ENCODE measurements at regions of chr10 and their contacts with region 1.

Region 1: DNA sequence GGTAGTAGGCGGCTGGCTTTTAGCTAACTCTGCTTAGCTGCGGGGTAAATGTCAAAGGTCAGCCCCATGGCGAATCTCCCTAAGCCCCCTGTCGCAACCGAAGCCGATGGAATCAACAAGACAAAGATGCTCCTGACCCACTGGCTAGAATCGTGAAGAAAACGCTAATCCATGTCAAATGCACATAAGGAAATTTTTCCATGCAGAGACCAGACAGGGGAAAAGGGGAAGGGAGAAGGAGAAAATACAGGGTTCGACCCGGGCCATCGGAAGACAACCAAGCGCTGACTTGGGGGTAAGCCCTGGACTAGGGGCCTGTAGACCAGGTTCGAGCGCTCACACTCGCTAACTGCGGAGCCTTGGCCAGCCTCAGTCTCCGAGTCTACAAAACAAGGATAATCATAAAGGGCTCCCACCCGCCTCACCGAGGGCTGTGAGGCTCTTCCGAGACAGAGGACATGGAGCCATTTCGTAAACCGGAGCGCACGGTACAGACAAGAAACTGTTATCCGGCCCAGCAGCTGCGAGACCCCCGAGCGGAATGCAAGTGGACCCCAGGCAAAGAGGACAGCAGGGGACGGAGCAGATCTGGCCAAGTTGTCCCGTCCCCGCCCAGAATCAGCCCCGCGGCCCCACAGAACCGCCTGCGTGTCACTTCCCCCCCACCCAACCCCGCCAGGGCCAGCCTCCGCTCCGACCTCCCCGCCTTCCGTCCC is 507 bp downstream of the SAR1A start:
- DNase-seq: no peak
- H3K4me3 Mint-ChIP-seq: peak overlapping the region; percentile 82
- H3K27ac Mint-ChIP-seq: peak overlapping the region; percentile 86
- H3K4me1 Mint-ChIP-seq: peaks cover 61% of the 10 kb centered on the region
- H3K27me3 Mint-ChIP-seq: no peaks in the 10 kb centered on the region

Region 2: GRCh38 chr10:70093335-70093944 is 76.4 kb before region 1 on chr10:
- CTCF ChIA-PET with region 1: interaction called, 3 read pairs
- POLR2A ChIA-PET with region 1: interaction called, 26 read pairs
- DNase-seq: peak; percentile 42
- H3K4me3 Mint-ChIP-seq: peak overlapping the region; percentile 63
- H3K27ac Mint-ChIP-seq: peak overlapping the region; percentile 81
- H3K4me1 Mint-ChIP-seq: peaks cover 31% of the 10 kb centered on the region
- H3K27me3 Mint-ChIP-seq: no peaks in the 10 kb centered on the region

Region 3: DNA sequence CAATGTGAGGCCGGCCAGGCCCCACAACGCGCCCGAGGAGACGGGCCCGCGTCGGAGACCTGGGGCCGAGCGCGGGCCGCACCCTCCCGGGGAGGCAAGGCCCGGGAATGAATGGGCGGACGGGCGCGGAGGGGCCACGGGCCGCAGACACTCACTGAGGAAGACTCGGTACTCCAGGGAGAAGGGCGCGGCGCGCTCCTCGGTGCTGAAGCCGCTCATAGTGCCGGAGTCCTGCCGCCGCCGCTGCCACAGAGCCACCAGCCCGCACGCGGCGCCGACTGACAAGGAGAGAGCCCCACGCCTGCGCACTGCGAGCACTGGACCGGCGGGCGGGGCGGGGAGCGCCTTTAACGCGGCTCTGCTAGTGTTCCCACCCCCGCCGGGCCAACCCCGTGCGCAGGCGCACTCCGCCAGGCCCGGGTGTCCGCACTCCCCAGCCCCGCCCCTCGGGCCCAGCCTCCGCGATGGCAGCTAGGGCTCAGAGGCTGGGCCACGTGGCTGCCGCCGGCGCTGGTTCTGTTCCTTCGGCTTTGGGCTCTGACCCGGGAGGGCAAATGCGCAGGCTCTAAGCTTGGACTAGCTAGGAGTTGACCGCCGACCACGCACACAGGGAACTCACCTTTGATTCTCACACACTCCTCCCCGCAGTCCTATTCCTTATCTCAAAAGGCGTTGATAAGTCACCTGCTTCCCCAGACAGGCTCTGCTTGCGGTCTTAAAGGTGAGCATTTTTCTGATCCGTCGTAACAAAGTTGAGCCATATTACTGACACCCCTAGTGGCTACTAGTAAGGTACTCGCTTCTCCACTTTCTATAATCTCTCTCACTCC is 63.5 kb after region 1 on chr10 and contains the start of gene PPA1:
- CTCF ChIA-PET with region 1: interaction called, 3 read pairs
- POLR2A ChIA-PET with region 1: interaction called, 25 read pairs
- DNase-seq: peak; percentile 99
- H3K4me3 Mint-ChIP-seq: peak within 1 kb of the TSS; percentile 80
- H3K27ac Mint-ChIP-seq: peak within 1 kb of the TSS; percentile 73
- H3K4me1 Mint-ChIP-seq: peaks cover 42% of the 10 kb centered on the region
- H3K27me3 Mint-ChIP-seq: no peaks in the 10 kb centered on the region
- total RNA-seq, gene PPA1: 155 to 158 TPM

Region 4: GRCh38 chr10:70277396-70278030 is 107.7 kb after region 1 on chr10:
- CTCF ChIA-PET with region 1: no interaction called
- POLR2A ChIA-PET with region 1: no interaction called
- DNase-seq: no peak
- H3K4me3 Mint-ChIP-seq: no peak overlapping the region
- H3K27ac Mint-ChIP-seq: no peak overlapping the region
- H3K4me1 Mint-ChIP-seq: peaks cover 6% of the 10 kb centered on the region
- H3K27me3 Mint-ChIP-seq: peaks cover 26% of the 10 kb centered on the region

Measured in activated CD4-positive, alpha-beta memory T cell treated with anti-CD3 and anti-CD28 coated beads, Interleukin-2, amount 10 ng/mL, durations not matched to agents 7 days and 5 days (primary cell).